ENCODE measurements at regions of chr5 and their contacts with region 1.

Region 1: DNA sequence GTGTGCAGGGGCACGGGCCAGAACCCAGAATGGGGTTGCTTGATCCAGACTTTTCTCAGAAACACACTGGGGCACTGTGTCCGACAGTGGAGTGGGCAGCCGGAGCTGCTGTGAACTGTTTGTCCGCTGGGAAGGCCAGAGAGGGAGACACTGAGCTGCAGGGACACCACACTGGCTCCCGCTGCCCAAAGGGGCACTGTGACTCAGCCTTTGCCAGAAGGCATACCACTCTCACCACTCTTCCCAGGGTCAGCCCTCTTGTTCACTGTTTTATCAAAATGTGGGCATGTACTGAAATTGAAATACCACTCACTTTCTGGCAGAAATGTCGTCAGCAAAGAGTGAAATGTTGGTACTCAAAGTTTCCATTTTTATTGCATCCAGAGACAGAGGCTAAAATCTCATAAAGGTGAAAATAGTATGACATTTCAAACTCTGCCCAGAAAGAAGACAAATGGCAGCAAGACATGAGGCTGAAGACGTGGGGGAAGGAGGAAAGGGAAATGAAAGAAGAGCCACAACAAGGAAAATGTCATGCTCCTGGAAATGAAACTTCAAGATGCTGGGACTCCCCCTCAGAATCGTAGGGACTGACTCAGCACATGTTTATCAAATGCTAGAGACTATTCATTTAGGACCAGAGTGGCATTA is 4.5 kb upstream of the IL7R start:
- DNase-seq: peak; percentile 74
- ATAC-seq: peak; percentile 43
- H3K4me3 Mint-ChIP-seq: peak overlapping the region; percentile 89
- H3K27ac Mint-ChIP-seq: peak overlapping the region; percentile 99
- H3K4me1 Mint-ChIP-seq: peaks cover 68% of the 10 kb centered on the region
- H3K27me3 Mint-ChIP-seq: no peaks in the 10 kb centered on the region

Region 2: GRCh38 chr5:35058374-35058788 is 793.8 kb before region 1 on chr5:
- CTCF ChIA-PET with region 1: no interaction called
- POLR2A ChIA-PET with region 1: no interaction called
- intact Hi-C with region 1: loop called in 1 of 2 experiments (anchors 2 kb)
- DNase-seq: peak; percentile 5
- ATAC-seq: peak; percentile 87
- H3K4me3 Mint-ChIP-seq: no peak overlapping the region
- H3K27ac Mint-ChIP-seq: no peak overlapping the region
- H3K4me1 Mint-ChIP-seq: peaks cover 9% of the 10 kb centered on the region
- H3K27me3 Mint-ChIP-seq: peaks cover 39% of the 10 kb centered on the region

Region 3: GRCh38 chr5:35665096-35665495 is 187.1 kb before region 1 on chr5:
- CTCF ChIA-PET with region 1: interaction called, 3 read pairs
- POLR2A ChIA-PET with region 1: no interaction called
- intact Hi-C with region 1: loop called in 1 of 2 experiments (anchors 2 kb)
- DNase-seq: no peak
- ATAC-seq: no peak
- H3K4me3 Mint-ChIP-seq: no peak overlapping the region
- H3K27ac Mint-ChIP-seq: peak overlapping the region; percentile 7
- H3K4me1 Mint-ChIP-seq: peaks cover 55% of the 10 kb centered on the region
- H3K27me3 Mint-ChIP-seq: no peaks in the 10 kb centered on the region

Region 4: GRCh38 chr5:35785601-35786085 is 66.6 kb before region 1 on chr5:
- CTCF ChIA-PET with region 1: interaction called, 58 read pairs
- POLR2A ChIA-PET with region 1: interaction called, 9 read pairs
- intact Hi-C with region 1: loop called (anchors 1 kb)
- DNase-seq: peak; percentile 73
- ATAC-seq: peak; percentile 84
- H3K4me3 Mint-ChIP-seq: peak overlapping the region; percentile 43
- H3K27ac Mint-ChIP-seq: peak overlapping the region; percentile 96
- H3K4me1 Mint-ChIP-seq: peaks cover 89% of the 10 kb centered on the region
- H3K27me3 Mint-ChIP-seq: no peaks in the 10 kb centered on the region

Region 5: DNA sequence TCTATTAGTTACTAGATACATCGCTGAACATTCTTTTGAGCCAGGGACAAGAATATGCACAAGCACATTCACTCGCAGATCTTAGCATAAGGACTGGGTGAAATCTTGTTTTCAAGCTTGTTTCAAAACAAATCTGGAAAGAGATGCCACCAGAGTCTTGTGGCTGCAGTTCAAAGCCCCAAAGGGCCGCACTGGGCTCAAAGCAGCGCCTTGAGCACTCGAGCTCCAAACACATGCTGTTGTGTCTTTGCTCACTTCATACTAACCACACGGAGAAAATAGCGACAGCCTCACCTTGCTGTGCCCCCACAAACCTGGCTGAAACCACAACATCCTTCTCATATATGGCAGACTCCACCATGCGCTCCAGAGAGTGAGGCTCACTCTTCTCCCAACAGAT is 29.7 kb before region 1 on chr5:
- CTCF ChIA-PET with region 1: interaction called, 40 read pairs
- POLR2A ChIA-PET with region 1: interaction called, 64 read pairs
- intact Hi-C with region 1: no loop called
- DNase-seq: peak; percentile 63
- ATAC-seq: no peak
- H3K4me3 Mint-ChIP-seq: peak overlapping the region; percentile 58
- H3K27ac Mint-ChIP-seq: peak overlapping the region; percentile 98
- H3K4me1 Mint-ChIP-seq: peaks cover 89% of the 10 kb centered on the region
- H3K27me3 Mint-ChIP-seq: no peaks in the 10 kb centered on the region

Region 6: DNA sequence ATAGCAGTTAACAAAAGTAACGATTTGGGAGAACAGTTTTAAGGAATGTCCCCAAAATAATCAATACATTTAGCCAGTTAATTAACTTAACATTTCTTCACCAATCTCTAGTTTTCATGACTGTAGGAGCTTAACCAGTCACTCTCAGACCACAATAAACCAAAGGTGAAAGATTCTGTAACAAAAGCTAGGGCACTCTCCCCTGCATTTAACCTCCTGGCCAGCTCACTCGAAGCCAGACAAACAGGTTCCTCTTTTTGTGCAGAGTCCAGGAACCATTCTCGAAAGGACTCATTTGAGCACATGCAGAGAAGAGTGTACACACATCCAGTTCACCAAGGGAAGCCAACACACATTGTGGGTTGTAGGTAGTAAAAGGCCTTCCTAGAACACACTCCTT is 10.9 kb after region 1 on chr5:
- CTCF ChIA-PET with region 1: interaction called, 11 read pairs
- POLR2A ChIA-PET with region 1: interaction called, 10 read pairs
- intact Hi-C with region 1: no loop called
- DNase-seq: peak; percentile 56
- ATAC-seq: peak; percentile 71
- H3K4me3 Mint-ChIP-seq: peak overlapping the region; percentile 89
- H3K27ac Mint-ChIP-seq: peak overlapping the region; percentile 95
- H3K4me1 Mint-ChIP-seq: peaks cover 82% of the 10 kb centered on the region
- H3K27me3 Mint-ChIP-seq: no peaks in the 10 kb centered on the region

Region 7: GRCh38 chr5:36060420-36060887 is 208.2 kb after region 1 on chr5:
- CTCF ChIA-PET with region 1: no interaction called
- POLR2A ChIA-PET with region 1: no interaction called
- intact Hi-C with region 1: no loop called
- DNase-seq: no peak
- ATAC-seq: peak; percentile 42
- H3K4me3 Mint-ChIP-seq: no peak overlapping the region
- H3K27ac Mint-ChIP-seq: no peak overlapping the region
- H3K4me1 Mint-ChIP-seq: peaks cover 4% of the 10 kb centered on the region
- H3K27me3 Mint-ChIP-seq: peaks cover 19% of the 10 kb centered on the region

Region 8: DNA sequence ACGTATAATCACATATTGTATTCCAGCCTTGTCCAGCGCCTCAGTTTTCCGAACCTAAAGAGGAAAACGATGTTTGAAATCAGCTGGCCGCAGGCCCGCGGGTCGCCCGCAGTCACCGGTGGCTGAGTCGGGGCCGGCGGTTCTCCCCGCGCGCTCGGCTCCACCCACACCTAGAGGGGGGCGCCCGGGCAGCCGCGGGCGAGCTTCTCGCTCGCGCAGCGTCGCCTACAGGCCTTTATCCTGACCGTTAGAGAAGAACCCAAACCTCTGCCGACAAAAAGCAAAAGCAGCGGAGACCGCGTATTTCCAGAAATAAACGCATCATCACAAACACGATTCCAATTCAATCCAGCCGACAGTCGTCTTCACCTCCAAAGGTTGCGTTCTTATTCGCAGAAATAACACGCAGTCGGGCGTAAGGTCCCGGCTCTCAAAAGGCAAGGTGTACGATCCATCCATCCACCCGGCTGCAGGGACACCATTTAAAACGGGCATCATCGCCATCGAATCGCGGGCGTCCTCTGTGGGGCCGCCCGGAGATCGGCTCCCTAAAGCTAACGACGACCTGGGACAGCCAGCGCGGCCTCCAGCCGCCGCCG is 1023.7 kb after region 1 on chr5:
- CTCF ChIA-PET with region 1: no interaction called
- POLR2A ChIA-PET with region 1: no interaction called
- intact Hi-C with region 1: loop called in 1 of 2 experiments (anchors 5 kb)
- DNase-seq: peak; percentile 85
- ATAC-seq: peak; percentile 54
- H3K4me3 Mint-ChIP-seq: peak overlapping the region; percentile 89
- H3K27ac Mint-ChIP-seq: peak overlapping the region; percentile 100
- H3K4me1 Mint-ChIP-seq: peaks cover 31% of the 10 kb centered on the region
- H3K27me3 Mint-ChIP-seq: no peaks in the 10 kb centered on the region